ENCODE measurements at regions of chr1 and their contacts with region 1.

Region 1: DNA sequence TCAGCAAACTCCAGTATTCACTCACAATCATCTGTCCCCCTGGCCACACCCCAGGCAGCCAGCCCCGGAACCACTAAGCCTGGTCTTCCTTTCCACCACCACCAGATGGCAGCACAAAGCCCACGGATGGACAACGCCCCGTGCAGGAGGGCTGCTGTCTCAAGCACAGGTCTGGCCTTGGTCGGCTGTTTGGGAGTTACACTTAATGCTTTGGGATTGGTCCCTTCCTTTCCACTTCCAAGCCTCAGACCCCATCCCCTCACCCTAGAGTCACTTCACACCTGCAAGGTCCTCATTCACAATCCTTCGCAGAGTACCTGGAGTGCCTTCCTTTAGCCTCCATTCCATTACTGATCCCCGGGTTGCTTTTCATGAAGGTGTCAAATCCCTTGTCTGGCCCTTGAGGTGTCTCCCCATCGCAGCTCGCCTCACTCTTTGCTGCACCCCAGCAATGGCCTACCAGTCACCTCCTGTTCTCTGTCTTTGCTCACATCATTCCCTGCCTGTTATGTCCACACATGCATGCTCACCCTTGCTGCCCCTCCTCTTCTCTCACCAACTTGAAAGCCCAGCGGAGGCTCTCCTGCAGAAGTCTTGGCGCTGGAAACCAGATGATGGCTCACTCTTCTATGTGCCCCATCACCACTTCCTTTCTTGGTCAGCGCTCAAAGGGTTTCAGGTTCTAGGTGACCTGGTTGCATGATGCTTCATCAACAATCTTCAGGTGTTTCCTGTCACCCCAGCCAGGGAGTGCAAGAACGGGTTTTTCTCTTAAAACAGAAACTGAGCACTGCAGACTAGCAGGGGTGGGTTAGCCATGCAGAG is 24.9 kb upstream of the KCNA2 start:
- DNase-seq: peak; percentile 95
- ATAC-seq: peak; percentile 84
- H3K4me3 Mint-ChIP-seq: no peak overlapping the region
- H3K27ac Mint-ChIP-seq: no peak overlapping the region
- H3K4me1 Mint-ChIP-seq: peaks cover 33% of the 10 kb centered on the region
- H3K27me3 Mint-ChIP-seq: no peaks in the 10 kb centered on the region

Region 2: GRCh38 chr1:110548381-110548780 is 82.7 kb before region 1 on chr1:
- CTCF ChIA-PET with region 1: no interaction called
- DNase-seq: no peak
- ATAC-seq: no peak
- H3K4me3 Mint-ChIP-seq: no peak overlapping the region
- H3K27ac Mint-ChIP-seq: no peak overlapping the region
- H3K4me1 Mint-ChIP-seq: no peaks in the 10 kb centered on the region
- H3K27me3 Mint-ChIP-seq: peaks cover 29% of the 10 kb centered on the region

Region 3: DNA sequence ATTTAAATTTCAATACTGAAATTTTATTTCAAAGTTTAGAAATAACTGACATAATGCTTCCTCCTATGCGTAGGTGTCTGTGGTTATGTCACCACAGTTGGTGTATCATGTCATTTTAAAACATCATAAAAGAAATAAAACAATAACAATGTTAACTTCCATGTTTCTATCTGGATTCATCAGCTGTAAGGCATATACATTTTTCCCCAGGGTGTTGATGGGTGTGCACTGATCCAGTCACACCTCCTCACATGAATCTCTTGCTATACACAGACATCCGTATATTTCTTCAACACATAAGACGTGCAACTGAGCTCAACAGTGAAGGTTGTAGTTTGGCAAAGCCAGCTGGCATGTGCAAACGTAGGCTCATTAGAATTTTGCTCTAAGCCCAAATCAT is 37.5 kb after region 1 on chr1:
- CTCF ChIA-PET with region 1: interaction called, 46 read pairs
- DNase-seq: no peak
- ATAC-seq: peak; percentile 40
- H3K4me3 Mint-ChIP-seq: peak overlapping the region; percentile 77
- H3K27ac Mint-ChIP-seq: peak overlapping the region; percentile 83
- H3K4me1 Mint-ChIP-seq: peaks cover 16% of the 10 kb centered on the region
- H3K27me3 Mint-ChIP-seq: no peaks in the 10 kb centered on the region

Region 4: GRCh38 chr1:110674337-110675059 is 43.4 kb after region 1 on chr1 and contains the start of gene KCNA3:
- CTCF ChIA-PET with region 1: interaction called, 46 read pairs
- DNase-seq: peak; percentile 83
- ATAC-seq: peak; percentile 43
- H3K4me3 Mint-ChIP-seq: peak within 1 kb of the TSS; percentile 100
- H3K27ac Mint-ChIP-seq: peak within 1 kb of the TSS; percentile 96
- H3K4me1 Mint-ChIP-seq: peaks cover 14% of the 10 kb centered on the region
- H3K27me3 Mint-ChIP-seq: no peaks in the 10 kb centered on the region
- total RNA-seq, gene KCNA3: 59.8 to 95.2 TPM

Measured in activated CD8-positive, alpha-beta memory T cell treated with anti-CD3 and anti-CD28 coated beads, Interleukin-2, amount 10 ng/mL, durations not matched to agents 7 days and 5 days (primary cell).